Upper lobe of right lung (tissue), 1 donor: ENCODE measurements at regions of chr3 and their contacts with region 1.

Region 1: DNA sequence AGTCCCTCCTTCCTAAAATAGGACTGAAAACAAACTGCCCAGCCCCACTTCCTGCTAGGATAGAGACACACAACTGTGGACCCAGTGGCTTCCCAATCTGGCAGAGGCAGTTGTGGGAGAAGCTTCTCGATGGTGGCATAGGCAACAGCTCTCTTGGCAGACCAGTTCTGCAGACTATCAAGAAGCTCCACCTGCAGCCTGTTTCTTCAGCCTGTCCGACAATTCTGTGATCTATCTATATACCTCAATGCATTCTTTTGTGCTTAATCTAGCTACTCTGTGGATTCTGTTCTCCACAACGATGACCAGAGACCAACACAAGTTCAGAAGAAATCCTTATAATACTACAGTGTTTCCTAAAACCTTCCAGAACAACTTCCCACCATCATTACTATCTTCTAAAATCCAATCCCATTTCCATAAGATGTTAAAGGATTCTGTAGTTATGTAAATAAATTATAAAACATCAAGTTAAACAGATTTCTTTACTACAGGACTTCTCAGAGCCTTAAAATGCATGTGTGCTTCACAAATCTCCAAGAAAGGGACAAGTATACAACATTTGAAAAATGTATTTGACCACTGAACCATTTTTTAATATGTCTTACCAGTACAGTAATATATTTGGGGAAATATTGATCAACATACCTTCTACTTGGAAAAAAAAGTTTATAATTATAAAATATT is 57.7 kb downstream of the IGF2BP2 start:
- DNase-seq: no peak
- ATAC-seq: no peak
- H3K4me3 ChIP-seq: no peak overlapping the region
- H3K27ac ChIP-seq: no peak overlapping the region
- H3K4me1 ChIP-seq: peaks cover 22% of the 10 kb centered on the region
- H3K27me3 ChIP-seq: no peaks in the 10 kb centered on the region
- CTCF ChIP-seq: no peak

Region 2: DNA sequence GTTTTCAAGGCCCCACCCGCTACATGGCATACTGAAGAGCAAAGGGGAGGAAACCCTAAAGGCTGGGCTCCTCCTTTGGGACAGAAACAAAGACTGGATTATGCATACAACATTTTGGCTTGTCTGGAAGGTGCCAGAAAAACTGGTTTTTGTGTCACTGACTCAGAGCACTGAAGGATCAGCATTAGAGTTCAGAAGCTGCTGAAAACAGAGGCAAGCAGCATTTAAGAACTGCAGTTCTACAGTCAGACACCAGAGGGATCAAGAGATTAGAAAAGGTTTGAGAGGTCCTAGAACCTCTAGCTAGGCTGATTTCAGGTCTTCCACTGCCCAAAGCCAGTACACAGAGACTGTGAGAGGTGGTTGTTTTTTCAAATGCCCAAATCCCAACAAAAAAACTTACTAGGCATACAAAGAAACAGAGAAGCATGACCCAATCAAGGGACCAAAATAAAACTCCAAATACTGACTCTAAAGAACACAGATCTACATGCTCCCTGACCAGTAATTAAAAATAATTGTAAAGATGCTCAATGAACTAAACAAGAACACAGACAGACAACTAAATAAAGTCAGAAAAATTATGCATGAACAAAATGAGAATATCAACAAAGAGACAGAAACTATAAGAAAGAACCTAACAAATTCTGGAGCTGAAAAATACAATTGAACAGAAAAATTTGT is 89.9 kb before region 1 on chr3:
- intact Hi-C with region 1: loop called (anchors 2 kb)
- DNase-seq: no peak
- ATAC-seq: peak; percentile 85
- H3K4me3 ChIP-seq: no peak overlapping the region
- H3K27ac ChIP-seq: no peak overlapping the region
- H3K4me1 ChIP-seq: no peaks in the 10 kb centered on the region
- H3K27me3 ChIP-seq: no peaks in the 10 kb centered on the region
- CTCF ChIP-seq: peak; percentile 69